ENCODE measurements at regions of chr5 and their contacts with region 1.

Region 1: DNA sequence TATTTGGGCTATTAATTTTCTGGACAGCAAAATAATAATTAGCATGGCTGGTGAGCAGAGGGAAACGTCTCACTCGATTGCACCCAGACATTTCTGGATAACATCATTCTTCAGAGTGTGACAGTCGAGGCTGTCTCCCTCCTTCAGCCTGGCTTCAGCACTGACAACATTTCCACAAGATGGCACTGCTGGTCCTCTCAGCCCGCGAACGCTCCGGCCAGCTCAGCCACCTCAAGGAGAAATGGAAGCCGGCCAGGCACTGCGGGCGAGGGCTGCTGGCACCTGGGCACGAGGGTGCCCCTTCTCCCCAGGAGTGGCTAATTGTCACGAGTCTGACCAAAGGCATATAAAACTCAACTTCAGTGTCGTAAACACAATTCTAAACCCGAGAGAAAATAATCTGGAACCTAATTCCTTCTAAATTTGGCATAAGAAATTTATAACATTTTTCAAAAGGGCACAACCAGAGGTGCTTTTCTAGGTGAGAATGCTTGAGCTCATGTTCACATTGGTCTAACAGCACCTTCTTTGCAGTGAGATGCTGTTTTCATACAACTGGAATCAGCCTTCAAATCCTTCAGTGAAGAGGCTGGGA is 65.9 kb downstream of the DAP start:
- DNase-seq: peak; percentile 61
- H3K4me3 ChIP-seq: no peak overlapping the region
- H3K27ac ChIP-seq: no peak overlapping the region
- H3K4me1 ChIP-seq: peaks cover 21% of the 10 kb centered on the region
- H3K27me3 ChIP-seq: no peaks in the 10 kb centered on the region
- CTCF ChIP-seq: peak; percentile 75

Region 2: DNA sequence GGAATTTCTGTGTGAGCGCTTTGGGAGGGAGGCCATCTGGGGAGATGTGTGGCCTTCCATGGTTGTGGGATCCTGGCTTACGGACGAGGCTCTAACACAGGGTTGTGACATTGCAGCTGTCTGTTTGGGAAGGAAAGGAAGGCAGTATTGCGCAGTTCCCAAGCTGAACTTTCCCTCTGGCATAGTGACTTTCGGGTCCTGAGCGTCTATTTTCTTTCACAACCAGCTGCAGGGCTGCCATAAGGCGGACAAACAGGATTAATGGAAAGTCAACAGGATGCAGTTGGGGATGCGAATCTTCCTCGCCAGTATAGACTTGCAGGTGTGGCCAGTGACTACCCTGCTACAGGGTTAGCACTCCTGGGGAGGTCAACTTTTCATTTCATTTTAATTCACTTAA is 419.2 kb before region 1 on chr5:
- CTCF ChIA-PET with region 1: no interaction called
- POLR2A ChIA-PET with region 1: no interaction called
- intact Hi-C with region 1: no loop called
- DNase-seq: no peak
- H3K4me3 ChIP-seq: no peak overlapping the region
- H3K27ac ChIP-seq: no peak overlapping the region
- H3K4me1 ChIP-seq: no peaks in the 10 kb centered on the region
- H3K27me3 ChIP-seq: no peaks in the 10 kb centered on the region
- CTCF ChIP-seq: no peak

Region 3: DNA sequence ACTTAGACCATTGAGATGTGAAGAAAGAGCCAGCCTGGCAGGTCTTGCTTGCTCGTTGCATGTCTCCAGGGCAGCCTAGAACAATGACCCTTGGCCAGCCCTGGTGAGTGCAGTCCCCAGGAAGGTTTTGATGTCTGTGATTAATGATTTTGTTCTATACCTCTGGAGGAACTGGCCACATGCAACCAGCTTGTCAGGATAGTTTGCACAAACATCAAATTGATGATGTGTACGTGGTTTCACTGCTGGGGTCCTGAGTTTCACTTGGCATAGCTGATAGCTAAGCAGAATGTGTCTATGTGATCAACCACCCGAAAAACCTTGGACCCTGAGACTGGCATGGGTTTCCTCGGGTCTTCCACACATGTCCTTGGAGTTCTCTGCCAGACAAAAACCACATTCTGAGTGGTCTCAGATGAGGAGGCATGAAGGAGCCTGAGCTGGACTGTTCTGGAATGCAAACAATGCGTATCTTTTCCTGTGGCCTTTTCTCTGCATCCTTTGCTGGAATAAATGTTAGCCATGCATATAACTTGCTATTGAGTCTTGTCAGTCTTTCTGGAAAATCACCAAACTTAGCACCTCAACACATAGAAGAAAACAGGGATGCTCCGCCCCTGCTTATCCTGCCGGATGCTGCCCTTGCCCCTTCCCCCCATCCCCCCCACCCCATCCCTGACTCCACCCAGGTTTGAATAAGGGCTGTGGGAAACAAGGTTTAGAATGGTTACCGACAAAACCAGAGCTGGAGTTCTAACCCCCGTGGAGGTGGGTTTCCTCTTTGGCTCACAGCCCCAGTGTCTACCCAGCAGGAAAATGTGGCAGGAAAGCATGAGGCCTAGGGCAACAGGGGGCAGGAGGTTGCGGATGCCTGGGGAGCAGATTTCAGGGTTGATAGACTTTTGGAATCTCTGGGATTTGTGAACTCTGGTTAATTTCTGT is 181.4 kb before region 1 on chr5:
- CTCF ChIA-PET with region 1: interaction called, 13 read pairs
- POLR2A ChIA-PET with region 1: no interaction called
- intact Hi-C with region 1: no loop called
- DNase-seq: peak; percentile 11
- H3K4me3 ChIP-seq: no peak overlapping the region
- H3K27ac ChIP-seq: no peak overlapping the region
- H3K4me1 ChIP-seq: no peaks in the 10 kb centered on the region
- H3K27me3 ChIP-seq: no peaks in the 10 kb centered on the region
- CTCF ChIP-seq: no peak

Region 4: DNA sequence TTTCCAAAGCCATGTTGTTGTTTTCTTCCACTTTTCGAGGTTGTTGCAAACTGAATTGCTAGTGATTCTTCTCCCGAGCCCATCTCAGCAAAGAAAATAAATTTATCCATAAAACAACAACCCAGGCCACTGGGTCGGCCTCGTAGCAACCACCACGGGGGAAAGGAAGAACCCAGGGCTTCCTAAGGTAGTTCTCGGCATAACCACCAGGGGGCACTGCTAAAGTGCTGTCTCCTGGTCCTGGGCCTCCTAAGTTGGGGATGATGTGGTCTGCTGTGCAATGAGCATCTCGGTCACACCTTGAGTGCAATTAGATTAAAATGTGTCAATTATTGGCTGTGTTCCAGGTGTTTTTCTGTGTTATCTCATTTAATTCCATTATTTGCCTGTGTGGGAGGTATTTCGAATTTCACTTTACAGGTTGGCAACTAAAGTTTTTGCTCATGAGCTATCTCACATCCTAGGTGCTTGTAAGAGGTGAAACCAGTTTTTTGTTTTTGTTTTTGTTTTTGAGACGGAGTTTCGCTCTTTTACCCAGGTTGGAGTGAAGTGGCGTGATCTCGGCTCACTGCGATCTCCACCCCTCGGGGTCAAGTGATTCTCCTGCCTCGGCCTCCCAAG is 168.7 kb after region 1 on chr5:
- CTCF ChIA-PET with region 1: no interaction called
- POLR2A ChIA-PET with region 1: no interaction called
- intact Hi-C with region 1: loop called (anchors 5 kb)
- DNase-seq: peak; percentile 68
- H3K4me3 ChIP-seq: no peak overlapping the region
- H3K27ac ChIP-seq: no peak overlapping the region
- H3K4me1 ChIP-seq: no peaks in the 10 kb centered on the region
- H3K27me3 ChIP-seq: peaks cover 3% of the 10 kb centered on the region
- CTCF ChIP-seq: peak; percentile 92

Region 5: GRCh38 chr5:10987930-10988504 is 292.9 kb after region 1 on chr5:
- CTCF ChIA-PET with region 1: no interaction called
- POLR2A ChIA-PET with region 1: no interaction called
- intact Hi-C with region 1: loop called (anchors 10 kb)
- DNase-seq: peak; percentile 49
- H3K4me3 ChIP-seq: no peak overlapping the region
- H3K27ac ChIP-seq: no peak overlapping the region
- H3K4me1 ChIP-seq: no peaks in the 10 kb centered on the region
- H3K27me3 ChIP-seq: no peaks in the 10 kb centered on the region
- CTCF ChIP-seq: peak; percentile 86

Measured in A673 (cell line).